ENCODE measurements at regions of chr22 and their contacts with region 1.

Region 1: GRCh38 chr22:26364066-26365015 is 64.7 kb upstream of the ASPHD2 start:
- DNase-seq: peak; percentile 55
- CTCF ChIP-seq: peak; percentile 71

Region 2: DNA sequence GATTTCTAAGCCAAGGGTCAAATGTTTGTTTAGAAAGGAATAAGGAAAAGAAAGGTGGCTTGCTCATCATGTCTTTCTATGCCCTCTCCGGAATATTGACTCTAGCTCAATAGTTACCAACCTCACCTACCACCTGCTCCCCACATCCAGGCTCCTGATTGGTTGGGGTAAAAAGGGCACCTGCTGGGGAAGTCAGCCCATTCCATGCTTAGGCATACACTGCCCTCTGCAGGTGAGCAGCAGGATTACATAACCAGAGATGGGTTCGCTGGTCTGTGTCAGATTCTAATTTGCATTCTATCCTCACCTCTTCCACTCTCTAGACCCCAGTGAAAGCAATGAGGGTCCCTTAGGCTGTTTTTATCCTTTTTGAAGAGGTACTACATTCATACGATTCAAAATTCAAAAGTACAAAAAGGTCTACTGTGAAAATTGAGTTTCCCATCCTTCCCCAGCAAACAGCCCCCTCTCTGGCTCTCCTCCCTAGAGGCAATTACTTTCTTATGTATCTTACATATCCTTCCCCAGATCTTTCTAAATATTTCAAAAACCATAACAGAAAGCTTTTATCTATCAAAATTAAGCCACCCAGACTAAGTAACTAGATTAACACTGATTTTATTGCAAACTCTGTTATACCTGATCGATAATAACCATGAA is 33.2 kb before region 1 on chr22:
- CTCF ChIA-PET with region 1: interaction called, 12 read pairs
- POLR2A ChIA-PET with region 1: no interaction called
- DNase-seq: peak; percentile 77
- CTCF ChIP-seq: peak; percentile 92

Region 3: DNA sequence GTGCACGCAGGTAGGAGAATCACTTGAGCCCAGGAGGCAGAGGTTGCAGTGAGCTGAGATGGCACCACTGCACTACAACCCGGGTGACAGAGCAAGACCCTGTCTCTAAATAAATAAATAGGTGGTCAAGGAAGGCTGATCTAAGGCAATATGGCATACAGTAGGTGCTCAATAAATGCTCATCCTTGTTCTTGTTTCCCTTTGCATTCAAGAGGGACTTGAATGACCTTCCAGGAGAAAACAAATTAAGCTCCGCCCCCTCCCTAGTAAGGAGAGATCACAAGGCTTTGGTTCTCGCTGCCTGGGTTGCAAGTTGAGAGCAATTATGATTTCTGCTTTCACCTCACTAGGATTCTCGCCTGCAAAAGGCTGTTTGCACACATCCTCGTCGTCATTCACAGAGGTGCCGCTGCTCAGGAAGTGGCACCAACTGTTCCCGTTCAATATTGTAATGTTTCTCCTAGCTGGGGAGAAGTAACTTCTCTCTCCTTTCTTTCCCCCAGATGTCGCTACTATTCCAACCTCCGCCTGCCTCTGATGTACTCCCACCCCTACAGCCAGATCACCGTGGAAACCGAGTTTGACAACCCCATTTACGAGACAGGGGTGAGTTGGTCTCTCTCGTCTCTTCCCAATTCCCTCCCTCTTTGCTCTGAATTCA is 13.0 kb after region 1 on chr22:
- CTCF ChIA-PET with region 1: interaction called, 70 read pairs
- POLR2A ChIA-PET with region 1: no interaction called
- DNase-seq: no peak
- CTCF ChIP-seq: peak; percentile 6

Region 4: GRCh38 chr22:26385164-26385563 is 20.8 kb after region 1 on chr22:
- CTCF ChIA-PET with region 1: interaction called, 70 read pairs
- POLR2A ChIA-PET with region 1: no interaction called
- DNase-seq: no peak
- CTCF ChIP-seq: no peak

Region 5: DNA sequence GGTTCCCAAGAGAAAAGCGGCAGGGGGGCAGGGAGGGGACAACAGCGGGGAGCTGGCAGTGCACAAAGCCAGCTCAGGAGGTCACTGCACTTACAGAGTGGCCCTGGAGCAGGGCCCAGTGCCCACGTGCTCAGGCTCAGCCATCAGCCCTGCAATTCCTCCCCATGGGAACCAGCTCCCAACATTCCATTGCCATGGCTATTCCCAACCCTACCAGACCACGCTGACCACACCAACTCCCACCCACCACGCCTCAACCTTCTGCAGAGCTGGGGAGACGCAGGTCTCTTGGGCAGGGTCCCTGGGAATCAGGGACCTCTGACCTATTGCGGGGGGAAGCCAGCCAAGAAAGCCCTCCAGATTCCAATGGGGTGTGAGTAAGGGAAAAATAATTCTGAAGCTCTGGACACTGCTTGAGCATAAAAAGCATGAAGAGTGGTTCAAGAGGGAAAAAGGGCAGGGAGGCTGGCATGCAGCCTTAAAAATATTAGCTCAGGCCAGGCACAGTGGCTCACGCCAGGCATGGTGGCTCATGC is 186.2 kb after region 1 on chr22:
- CTCF ChIA-PET with region 1: no interaction called
- POLR2A ChIA-PET with region 1: no interaction called
- DNase-seq: no peak
- CTCF ChIP-seq: no peak

Region 6: GRCh38 chr22:26665813-26666231 is 301.5 kb after region 1 on chr22:
- CTCF ChIA-PET with region 1: interaction called, 26 read pairs
- POLR2A ChIA-PET with region 1: no interaction called
- DNase-seq: no peak
- CTCF ChIP-seq: no peak

Measured in GM10248 (cell line).